Right ventricle myocardium inferior (tissue), 1 donor: ENCODE measurements at regions of chr12 and their contacts with region 1.

Region 1: DNA sequence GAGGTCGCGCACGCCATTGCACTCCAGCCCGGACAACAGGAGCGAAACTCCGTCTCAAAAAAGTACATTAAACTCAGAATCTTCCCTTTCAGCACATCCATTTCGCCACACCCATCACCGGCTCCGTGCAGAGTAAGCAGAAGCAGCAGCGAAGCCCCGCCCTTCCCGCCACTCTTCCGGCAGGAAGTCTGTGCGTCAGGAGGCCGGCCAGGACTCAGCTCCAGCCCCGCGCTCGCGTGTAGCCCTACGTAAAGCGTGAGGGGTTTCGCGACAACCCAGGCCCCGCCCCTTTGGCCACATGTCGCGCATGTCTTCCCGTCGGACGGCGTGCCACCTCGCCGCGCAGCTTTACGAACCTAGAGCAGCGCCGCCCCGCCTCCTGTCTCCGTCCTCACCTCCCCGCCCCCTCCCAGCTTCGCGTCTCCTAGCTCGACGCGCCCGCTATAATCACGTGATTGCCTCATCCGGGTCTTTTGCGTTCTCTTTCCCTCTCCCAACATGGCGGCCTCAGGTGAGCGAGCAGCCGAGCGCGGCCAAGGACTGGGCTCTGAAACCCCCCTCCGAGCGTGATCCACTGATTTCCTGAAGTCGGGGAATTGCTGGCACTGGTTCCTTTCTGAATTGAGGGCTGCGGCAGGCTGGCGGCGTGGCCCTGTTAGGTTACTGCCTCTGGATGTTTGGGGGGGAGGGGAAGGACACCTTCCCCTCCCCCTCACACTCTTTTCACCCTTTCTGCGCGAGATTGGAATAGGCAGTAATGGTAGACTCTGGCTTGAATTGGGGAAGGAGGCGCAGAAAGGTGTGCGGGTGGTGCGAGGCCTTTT is at the start of gene EIF4B:
- DNase-seq: peak; percentile 100
- ATAC-seq: peak; percentile 97
- total RNA-seq, gene EIF4B: 416 TPM

Region 2: GRCh38 chr12:52121824-52122539 is 884.2 kb before region 1 on chr12:
- intact Hi-C with region 1: no loop called
- DNase-seq: peak; percentile 87
- ATAC-seq: peak; percentile 32

Region 3: GRCh38 chr12:53047221-53048042 is 41.2 kb after region 1 on chr12:
- intact Hi-C with region 1: loop called (anchors 5 kb)
- DNase-seq: peak; percentile 91
- ATAC-seq: peak; percentile 11